ENCODE measurements at regions of chr3 and their contacts with region 1.

Region 1: DNA sequence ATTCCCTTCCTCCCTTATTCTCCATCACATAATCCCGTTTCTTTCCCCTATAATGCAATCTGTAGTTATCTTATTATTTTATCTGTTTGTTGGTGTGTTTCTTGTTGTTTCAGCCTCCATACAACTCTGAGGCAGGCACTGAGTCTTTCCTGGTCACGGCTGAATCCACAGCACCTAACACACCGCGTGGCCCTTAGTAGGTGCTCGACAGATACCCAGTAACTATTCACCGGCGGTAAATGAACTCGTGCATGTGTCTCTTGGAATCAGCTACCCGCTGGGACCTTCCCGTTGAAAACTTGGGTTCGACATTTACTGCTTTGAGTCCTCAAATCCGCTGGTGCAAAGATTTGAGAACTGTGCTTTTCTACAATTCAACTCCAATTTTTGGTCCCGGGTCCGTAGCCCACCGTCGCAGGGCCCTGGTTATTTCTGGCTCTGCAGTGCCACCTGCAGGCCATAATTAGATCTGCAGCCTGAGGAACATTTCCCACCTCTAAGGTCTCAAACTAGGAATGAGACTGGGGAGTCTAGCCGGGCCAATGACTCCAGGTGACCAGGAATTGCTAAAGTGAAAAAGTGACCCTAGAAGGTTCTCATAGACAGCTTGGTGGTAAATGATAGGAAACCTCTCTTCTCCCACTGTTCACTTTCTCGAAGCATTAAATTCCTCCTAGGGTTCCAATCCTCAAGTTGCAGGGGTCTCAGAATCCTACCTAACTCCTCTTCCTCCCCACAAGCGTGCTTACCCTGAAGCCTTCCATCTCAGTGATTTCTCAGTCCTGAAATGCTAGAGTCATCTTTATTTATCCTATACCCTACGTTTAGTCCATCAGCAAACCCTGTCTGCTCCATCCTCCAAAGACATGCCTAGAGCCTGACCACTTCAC is 40.0 kb upstream of the TRH start:
- DNase-seq: peak; percentile 43
- ATAC-seq: peak; percentile 75

Region 2: GRCh38 chr3:129383292-129383860 is 551.1 kb before region 1 on chr3:
- intact Hi-C with region 1: loop called (anchors 10 kb)
- DNase-seq: peak; percentile 48
- ATAC-seq: peak; percentile 86

Region 3: DNA sequence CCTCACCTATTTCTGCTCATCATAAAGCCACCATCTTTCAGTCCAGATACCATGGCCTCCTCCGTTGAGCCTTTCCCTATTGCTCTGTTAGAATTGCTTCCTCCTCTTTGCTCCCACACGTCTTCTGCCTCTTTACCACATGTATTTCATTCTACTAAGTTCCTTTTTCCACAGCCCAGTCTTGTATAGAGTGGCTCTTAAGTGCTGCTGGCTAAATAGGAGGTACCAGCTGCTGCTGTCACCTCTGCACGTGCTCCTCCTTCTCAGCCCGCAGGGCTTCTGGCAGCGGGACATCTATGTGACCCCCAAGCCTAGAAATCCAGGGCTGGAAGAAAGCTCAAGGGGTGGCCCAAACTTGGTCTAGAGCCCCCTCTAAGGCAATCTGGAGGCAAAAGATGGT is 289.2 kb before region 1 on chr3:
- intact Hi-C with region 1: loop called (anchors 5 kb)
- DNase-seq: no peak
- ATAC-seq: no peak

Region 4: DNA sequence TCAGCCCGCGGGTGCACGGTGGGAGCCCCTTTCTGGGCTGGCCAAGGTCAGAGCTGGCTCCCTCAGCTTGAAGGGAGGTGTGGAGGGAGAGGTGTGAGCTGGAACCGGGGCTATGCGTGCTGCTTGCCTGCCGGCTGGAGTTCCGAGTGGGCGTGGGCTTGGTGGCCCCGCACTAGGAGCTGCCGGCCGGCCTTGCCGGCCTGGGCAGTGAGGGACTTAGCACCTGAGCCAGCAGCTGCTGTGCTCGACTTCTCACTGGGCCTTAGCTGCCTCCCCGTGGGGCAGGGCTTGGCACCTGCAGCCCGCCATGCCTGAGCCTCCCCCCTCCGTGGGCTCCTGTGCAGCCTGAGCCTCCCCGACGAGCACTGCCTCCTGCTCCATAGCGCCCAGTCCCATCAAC is 76.1 kb after region 1 on chr3:
- intact Hi-C with region 1: no loop called
- DNase-seq: no peak
- ATAC-seq: no peak

Region 5: GRCh38 chr3:130081351-130081881 is 146.9 kb after region 1 on chr3 and contains the start of gene ALG1L2:
- intact Hi-C with region 1: no loop called
- DNase-seq: no peak
- ATAC-seq: no peak
- total RNA-seq, gene ALG1L2: not detected

Region 6: GRCh38 chr3:131405411-131405810 is 1470.9 kb after region 1 on chr3:
- intact Hi-C with region 1: no loop called
- DNase-seq: no peak
- ATAC-seq: no peak

Measured in left ventricle myocardium superior (tissue), 1 donor.